Brain microvascular endothelial cell (primary cell): ENCODE measurements at regions of chr12 and their contacts with region 1.

Region 1: GRCh38 chr12:49644620-49644994 is 21.2 kb downstream of the PRPF40B start:
- DNase-seq: peak; percentile 57
- H3K4me3 ChIP-seq: no peak overlapping the region
- H3K27ac ChIP-seq: no peak overlapping the region
- H3K27me3 ChIP-seq: no peaks in the 10 kb centered on the region
- CTCF ChIP-seq: peak; percentile 97

Region 2: DNA sequence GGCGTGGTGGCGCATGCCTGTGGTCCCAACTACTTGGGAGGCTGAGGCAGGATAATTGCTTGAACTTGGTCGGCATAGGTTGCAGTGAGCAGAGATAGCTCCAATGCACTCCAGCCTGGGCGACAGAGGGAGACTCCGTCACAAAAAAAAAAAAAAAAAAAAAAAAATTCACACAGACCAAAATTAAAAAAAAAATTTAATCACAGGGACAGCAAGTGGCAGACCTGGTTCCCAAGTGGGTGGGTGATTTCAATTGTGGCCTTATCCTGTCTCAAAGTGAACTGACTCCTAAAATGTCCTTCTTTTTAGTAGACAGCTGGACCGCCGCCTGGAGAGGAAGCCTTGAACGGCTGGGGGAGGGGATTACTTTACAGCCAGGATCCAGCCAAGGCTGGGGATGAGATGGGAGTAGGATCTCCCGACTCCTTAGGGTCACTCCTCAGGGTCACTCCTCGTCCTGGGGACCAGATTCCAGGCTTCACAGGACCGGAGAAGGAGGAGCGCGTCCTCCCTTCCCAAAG is 107.3 kb before region 1 on chr12:
- in situ Hi-C with region 1: no loop called
- DNase-seq: no peak
- H3K4me3 ChIP-seq: no peak overlapping the region
- H3K27ac ChIP-seq: no peak overlapping the region
- H3K27me3 ChIP-seq: peaks cover 22% of the 10 kb centered on the region
- CTCF ChIP-seq: no peak

Region 3: GRCh38 chr12:49707128-49707811 is 62.7 kb after region 1 on chr12 and contains the start of gene FMNL3:
- in situ Hi-C with region 1: loop called (anchors 5 kb)
- DNase-seq: peak; percentile 93
- H3K4me3 ChIP-seq: peak within 1 kb of the TSS; percentile 86
- H3K27ac ChIP-seq: peak within 1 kb of the TSS; percentile 88
- H3K27me3 ChIP-seq: no peaks in the 10 kb centered on the region
- CTCF ChIP-seq: peak; percentile 83

Region 4: GRCh38 chr12:49783917-49784676 is 139.5 kb after region 1 on chr12:
- in situ Hi-C with region 1: no loop called
- DNase-seq: no peak
- H3K4me3 ChIP-seq: no peak overlapping the region
- H3K27ac ChIP-seq: no peak overlapping the region
- H3K27me3 ChIP-seq: no peaks in the 10 kb centered on the region
- CTCF ChIP-seq: no peak